Activated naive CD4-positive, alpha-beta T cell treated with anti-CD3 and anti-CD28 coated beads for 36 hours (primary cell): ENCODE measurements at regions of chr18 and their contacts with region 1.

Region 1: GRCh38 chr18:13558124-13558523 is 168.2 kb downstream of the FAM210A start:
- DNase-seq: peak; percentile 48
- H3K4me3 Mint-ChIP-seq: no peak overlapping the region
- H3K27ac Mint-ChIP-seq: no peak overlapping the region
- H3K4me1 Mint-ChIP-seq: peaks cover 32% of the 10 kb centered on the region
- H3K27me3 Mint-ChIP-seq: no peaks in the 10 kb centered on the region

Region 2: DNA sequence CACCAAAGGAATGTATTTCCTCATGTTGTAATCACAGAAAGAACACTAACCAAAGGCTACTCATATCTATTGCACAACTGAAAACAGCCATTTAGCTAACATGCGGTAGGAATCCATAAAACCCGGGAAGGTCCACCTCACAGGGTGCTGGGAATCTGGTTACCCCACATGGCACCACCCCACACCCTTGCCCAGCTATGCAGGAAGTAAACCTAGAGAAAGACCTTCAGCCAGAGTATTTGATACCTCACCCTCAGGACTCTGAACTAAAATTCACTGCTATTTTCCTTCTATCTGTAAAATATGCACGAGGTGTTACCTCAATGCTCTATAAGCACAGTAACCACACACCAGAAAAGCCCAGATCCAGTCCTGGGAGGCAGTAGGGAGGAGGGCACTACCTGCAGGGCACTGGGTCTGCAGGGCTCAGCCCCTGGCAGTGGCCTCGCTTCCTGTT is 719.9 kb before region 1 on chr18:
- CTCF ChIA-PET with region 1: no interaction called
- intact Hi-C with region 1: loop called (anchors 1 kb)
- DNase-seq: no peak
- H3K4me3 Mint-ChIP-seq: peak overlapping the region; percentile 46
- H3K27ac Mint-ChIP-seq: peak overlapping the region; percentile 84
- H3K4me1 Mint-ChIP-seq: peaks cover 52% of the 10 kb centered on the region
- H3K27me3 Mint-ChIP-seq: no peaks in the 10 kb centered on the region

Region 3: GRCh38 chr18:13318731-13319501 is 239.2 kb before region 1 on chr18:
- CTCF ChIA-PET with region 1: no interaction called
- intact Hi-C with region 1: no loop called
- DNase-seq: no peak
- H3K4me3 Mint-ChIP-seq: no peak overlapping the region
- H3K27ac Mint-ChIP-seq: no peak overlapping the region
- H3K4me1 Mint-ChIP-seq: peaks cover 9% of the 10 kb centered on the region
- H3K27me3 Mint-ChIP-seq: no peaks in the 10 kb centered on the region

Region 4: GRCh38 chr18:13425462-13426133 is 132.5 kb before region 1 on chr18:
- CTCF ChIA-PET with region 1: no interaction called
- intact Hi-C with region 1: no loop called
- DNase-seq: peak; percentile 46
- H3K4me3 Mint-ChIP-seq: no peak overlapping the region
- H3K27ac Mint-ChIP-seq: no peak overlapping the region
- H3K4me1 Mint-ChIP-seq: peaks cover 22% of the 10 kb centered on the region
- H3K27me3 Mint-ChIP-seq: no peaks in the 10 kb centered on the region

Region 5: GRCh38 chr18:13464432-13465123 is 93.5 kb before region 1 on chr18:
- CTCF ChIA-PET with region 1: no interaction called
- intact Hi-C with region 1: loop called (anchors 2 kb)
- DNase-seq: peak; percentile 86
- H3K4me3 Mint-ChIP-seq: peak overlapping the region; percentile 82
- H3K27ac Mint-ChIP-seq: peak overlapping the region; percentile 95
- H3K4me1 Mint-ChIP-seq: peaks cover 56% of the 10 kb centered on the region
- H3K27me3 Mint-ChIP-seq: no peaks in the 10 kb centered on the region

Region 6: DNA sequence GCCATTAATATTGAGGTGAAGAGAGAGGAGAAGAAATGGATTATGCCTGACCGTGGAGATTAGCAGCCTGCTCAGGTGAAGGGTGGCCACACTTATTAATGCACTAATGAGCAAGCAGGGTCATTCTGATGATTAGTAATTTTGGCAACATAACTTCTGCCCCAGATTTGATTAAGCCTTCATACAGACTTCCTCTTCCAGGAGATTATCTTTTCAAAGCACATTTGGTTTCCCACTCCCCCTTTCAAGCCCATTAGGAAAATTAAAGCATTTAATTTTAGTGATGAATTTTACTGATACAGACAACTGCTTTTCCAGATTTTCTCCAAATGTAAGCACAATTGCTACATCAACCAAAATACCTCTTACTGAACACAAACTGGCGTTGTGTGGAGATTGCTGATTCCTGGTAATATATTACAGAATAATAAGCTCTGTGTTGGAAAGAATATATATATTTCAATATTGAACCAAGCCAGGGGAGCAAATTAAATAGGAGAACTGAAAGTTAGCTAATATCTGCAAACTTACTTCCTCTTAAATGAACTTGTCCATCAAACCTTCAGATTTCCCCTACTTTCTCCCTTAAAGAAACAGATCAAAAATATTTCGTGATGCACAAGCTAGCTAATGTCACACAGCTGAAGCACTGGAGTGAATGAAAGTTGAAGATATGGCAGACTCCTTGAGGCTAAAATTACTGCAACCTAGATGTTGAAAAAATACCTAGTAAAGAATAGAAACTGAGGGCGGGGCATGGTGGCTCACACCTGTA is 27.4 kb after region 1 on chr18:
- CTCF ChIA-PET with region 1: interaction called, 5 read pairs
- intact Hi-C with region 1: loop called (anchors 1 kb)
- DNase-seq: no peak
- H3K4me3 Mint-ChIP-seq: no peak overlapping the region
- H3K27ac Mint-ChIP-seq: no peak overlapping the region
- H3K4me1 Mint-ChIP-seq: peaks cover 44% of the 10 kb centered on the region
- H3K27me3 Mint-ChIP-seq: no peaks in the 10 kb centered on the region

Region 7: GRCh38 chr18:13629841-13630715 is 72.0 kb after region 1 on chr18:
- CTCF ChIA-PET with region 1: interaction called, 77 read pairs
- intact Hi-C with region 1: loop called (anchors 1 kb)
- DNase-seq: peak; percentile 68
- H3K4me3 Mint-ChIP-seq: no peak overlapping the region
- H3K27ac Mint-ChIP-seq: no peak overlapping the region
- H3K4me1 Mint-ChIP-seq: no peaks in the 10 kb centered on the region
- H3K27me3 Mint-ChIP-seq: no peaks in the 10 kb centered on the region

Region 8: GRCh38 chr18:13800505-13801259 is 242.6 kb after region 1 on chr18:
- CTCF ChIA-PET with region 1: interaction called, 6 read pairs
- intact Hi-C with region 1: loop called (anchors 1 kb)
- DNase-seq: peak; percentile 77
- H3K4me3 Mint-ChIP-seq: peak overlapping the region; percentile 69
- H3K27ac Mint-ChIP-seq: no peak overlapping the region
- H3K4me1 Mint-ChIP-seq: peaks cover 6% of the 10 kb centered on the region
- H3K27me3 Mint-ChIP-seq: peaks cover 40% of the 10 kb centered on the region